ENCODE measurements at regions of chr12 and their contacts with region 1.

Region 1: GRCh38 chr12:107109741-107110719 is 16.7 kb upstream of the CRY1 start:
- H3K4me3 ChIP-seq: no peak overlapping the region
- H3K27ac ChIP-seq: no peak overlapping the region
- H3K4me1 ChIP-seq: no peaks in the 10 kb centered on the region
- CTCF ChIP-seq: no peak

Region 2: GRCh38 chr12:107035733-107036132 is 74.3 kb before region 1 on chr12:
- CTCF ChIA-PET with region 1: no interaction called
- POLR2A ChIA-PET with region 1: no interaction called
- H3K4me3 ChIP-seq: no peak overlapping the region
- H3K27ac ChIP-seq: no peak overlapping the region
- H3K4me1 ChIP-seq: peaks cover 2% of the 10 kb centered on the region; the same call in 1 of the 2 replicates
- CTCF ChIP-seq: no peak

Region 3: GRCh38 chr12:107079172-107080011 is 30.6 kb before region 1 on chr12:
- CTCF ChIA-PET with region 1: interaction called, 13 read pairs
- POLR2A ChIA-PET with region 1: no interaction called
- H3K4me3 ChIP-seq: no peak overlapping the region
- H3K27ac ChIP-seq: no peak overlapping the region
- H3K4me1 ChIP-seq: no peaks in the 10 kb centered on the region
- CTCF ChIP-seq: no peak

Region 4: DNA sequence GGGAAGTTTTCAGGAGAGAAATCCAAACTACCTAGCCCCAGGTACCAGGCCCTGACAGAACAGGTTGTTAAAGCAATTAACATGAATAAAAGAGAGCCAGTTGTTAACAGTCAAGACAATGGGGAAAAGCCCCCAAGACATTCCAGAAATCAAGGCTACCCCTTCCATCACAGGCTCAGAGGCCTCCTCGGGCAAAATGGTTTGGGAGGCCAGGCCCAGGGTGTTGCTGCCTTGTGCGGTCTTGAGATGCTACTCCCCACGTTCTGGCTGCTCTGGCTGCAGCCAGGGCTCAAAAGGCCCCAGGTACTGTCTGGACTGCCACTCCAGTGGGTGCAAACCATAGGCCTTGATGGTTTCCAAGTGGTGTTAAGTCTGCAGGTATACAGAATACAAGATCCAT is 23.7 kb before region 1 on chr12:
- CTCF ChIA-PET with region 1: interaction called, 42 read pairs
- POLR2A ChIA-PET with region 1: no interaction called
- H3K4me3 ChIP-seq: no peak overlapping the region
- H3K27ac ChIP-seq: no peak overlapping the region
- H3K4me1 ChIP-seq: 0 out of 2 replicates have a peak, but pooled peaks cover 2% of the 10 kb centered on the region
- CTCF ChIP-seq: no peak

Region 5: DNA sequence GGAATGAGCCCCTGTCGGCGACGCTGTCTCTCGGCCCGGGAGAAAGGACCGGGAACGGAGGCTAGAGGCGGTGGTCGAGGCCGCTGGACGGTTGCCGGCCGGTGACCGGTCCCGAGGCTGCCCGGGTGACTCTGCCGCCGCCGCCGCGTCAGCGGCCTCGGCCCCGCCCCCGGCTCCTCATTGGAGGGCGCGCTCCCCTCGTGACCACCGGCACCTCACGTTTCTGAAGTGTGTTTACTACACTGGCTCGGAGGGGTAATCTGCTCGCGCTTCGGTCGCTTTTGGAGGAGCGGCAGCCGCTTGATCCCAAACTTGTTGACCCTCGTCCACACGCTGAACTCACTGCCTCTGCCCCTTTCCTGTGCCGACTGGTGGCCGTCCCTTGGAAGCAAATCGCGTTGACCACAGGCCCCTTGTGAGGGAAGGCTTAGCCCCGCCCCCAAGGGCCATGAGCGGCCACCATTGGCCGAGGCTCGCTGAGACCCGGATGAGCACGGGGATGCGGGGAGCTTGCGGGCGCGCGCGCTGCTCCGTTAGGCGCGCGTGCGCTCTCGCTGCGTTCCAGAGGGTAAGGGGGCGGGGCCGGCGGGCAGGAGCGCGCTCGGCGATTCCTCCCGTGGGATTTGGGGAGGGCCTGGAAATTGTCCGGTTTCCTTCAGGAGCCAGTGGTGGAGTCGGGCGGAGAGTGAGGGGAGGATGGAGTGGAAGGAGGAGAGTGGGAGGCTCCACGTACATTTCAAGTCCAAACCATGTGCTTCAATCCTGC is 16.4 kb before region 1 on chr12 and contains the start of gene CRY1:
- CTCF ChIA-PET with region 1: interaction called, 42 read pairs
- POLR2A ChIA-PET with region 1: no interaction called
- H3K4me3 ChIP-seq: peak within 1 kb of the TSS; percentile 89
- H3K27ac ChIP-seq: peak within 1 kb of the TSS; percentile 44; the same call in 1 of the 2 replicates
- H3K4me1 ChIP-seq: peaks cover 6% of the 10 kb centered on the region; the same call in 1 of the 2 replicates
- CTCF ChIP-seq: 0 out of 2 replicates have a peak, but pooled peaks have one; percentile 14

Measured in HEK293 (cell line).